ENCODE measurements at regions of chrX and their contacts with region 1.

Region 1: DNA sequence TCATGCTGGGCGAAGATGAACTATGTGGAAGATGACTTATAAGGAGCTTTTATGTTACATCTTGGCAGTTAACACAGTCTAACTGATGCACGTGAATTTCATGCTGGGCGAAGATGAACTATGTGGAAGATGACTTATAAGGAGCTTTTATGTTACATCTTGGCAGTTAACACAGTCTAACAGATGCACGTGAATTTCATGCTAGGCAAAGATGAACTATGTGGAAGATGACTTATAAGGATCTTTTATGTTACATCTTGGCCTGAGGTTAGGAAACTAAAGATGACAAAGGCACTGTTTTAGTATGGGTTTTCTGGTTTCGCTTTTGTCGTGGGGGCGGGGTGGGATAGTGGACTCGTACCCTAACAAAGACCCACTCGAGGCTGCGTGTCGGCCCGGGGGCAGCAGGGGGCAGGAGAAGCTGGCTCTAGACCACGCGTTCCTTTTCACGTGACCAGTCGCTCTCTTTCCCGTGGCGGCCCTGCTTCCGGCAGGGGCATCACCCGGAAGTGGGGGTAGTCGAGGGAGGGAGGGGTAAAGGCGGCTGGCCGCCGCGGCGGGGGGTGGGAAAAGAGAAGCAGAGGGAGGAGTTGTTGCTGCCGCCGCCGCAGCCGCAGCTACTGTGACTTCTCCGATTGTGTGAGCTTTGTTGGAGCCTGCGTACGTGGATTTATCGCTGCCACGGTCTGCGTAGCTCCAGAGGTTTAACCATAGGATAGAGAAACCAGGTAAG is at the start of gene ATP7A:
- DNase-seq: peak; percentile 67
- ATAC-seq: peak; percentile 98
- H3K4me3 ChIP-seq: peak within 1 kb of the TSS; percentile 76
- H3K27ac ChIP-seq: peak within 1 kb of the TSS; percentile 91
- H3K4me1 ChIP-seq: peaks cover 13% of the 10 kb centered on the region
- H3K27me3 ChIP-seq: no peaks in the 10 kb centered on the region
- CTCF ChIP-seq: peak; percentile 75
- total RNA-seq, gene ATP7A: 13.5 TPM

Region 2: DNA sequence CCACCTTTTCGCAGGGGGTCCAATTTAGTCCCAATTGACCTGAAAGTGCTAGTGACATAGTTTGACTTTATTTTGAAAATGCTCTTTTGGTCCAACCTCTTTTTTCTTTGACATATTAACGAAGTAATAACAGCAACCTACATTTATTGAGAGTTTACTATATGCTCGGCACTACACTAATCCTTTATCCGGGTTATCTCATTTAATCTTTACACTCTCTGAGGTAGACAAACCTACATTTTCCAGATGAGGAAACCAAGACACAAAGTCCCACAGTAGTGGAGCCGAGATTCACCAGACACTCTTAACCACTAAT is 124.0 kb before region 1 on chrX:
- CTCF ChIA-PET with region 1: no interaction called
- POLR2A ChIA-PET with region 1: interaction called, 11 read pairs
- in situ Hi-C with region 1: no loop called
- intact Hi-C with region 1: no loop called
- DNase-seq: no peak
- ATAC-seq: peak; percentile 13; the same call in 1 of the 2 replicates
- H3K4me3 ChIP-seq: peak overlapping the region; percentile 83 to 86
- H3K27ac ChIP-seq: peak overlapping the region; percentile 90
- H3K4me1 ChIP-seq: 0 out of 2 replicates have a peak, but pooled peaks cover 7% of the 10 kb centered on the region
- H3K27me3 ChIP-seq: no peaks in the 10 kb centered on the region
- CTCF ChIP-seq: no peak

Region 3: DNA sequence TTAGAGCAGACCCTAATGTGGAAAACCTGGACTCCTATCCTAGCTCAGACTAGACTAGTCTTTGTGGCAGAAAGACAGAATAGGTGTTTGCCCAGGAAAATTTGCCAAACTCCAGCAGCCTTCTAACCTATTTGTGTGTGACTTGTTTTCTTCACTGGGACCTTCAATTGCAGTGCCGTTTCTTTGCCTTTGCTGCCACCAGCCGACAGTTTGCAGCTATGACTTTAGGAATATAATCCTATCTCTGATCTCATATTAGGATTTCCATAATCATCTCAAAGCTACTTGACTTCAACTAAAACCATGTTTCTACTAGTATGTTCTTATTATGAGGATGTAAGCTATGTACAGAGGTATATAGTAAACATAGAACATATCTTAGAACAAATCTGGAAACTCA is 119.4 kb after region 1 on chrX:
- CTCF ChIA-PET with region 1: interaction called, 3 read pairs
- POLR2A ChIA-PET with region 1: no interaction called
- in situ Hi-C with region 1: no loop called
- intact Hi-C with region 1: loop called (anchors 2 kb)
- DNase-seq: no peak
- ATAC-seq: peak; percentile 86
- H3K4me3 ChIP-seq: no peak overlapping the region
- H3K27ac ChIP-seq: no peak overlapping the region
- H3K4me1 ChIP-seq: no peaks in the 10 kb centered on the region
- H3K27me3 ChIP-seq: no peaks in the 10 kb centered on the region
- CTCF ChIP-seq: peak; percentile 77

Measured in Panc1 (cell line).